Right ventricle myocardium superior (tissue), 1 donor: ENCODE measurements at regions of chr20 and their contacts with region 1.

Region 1: DNA sequence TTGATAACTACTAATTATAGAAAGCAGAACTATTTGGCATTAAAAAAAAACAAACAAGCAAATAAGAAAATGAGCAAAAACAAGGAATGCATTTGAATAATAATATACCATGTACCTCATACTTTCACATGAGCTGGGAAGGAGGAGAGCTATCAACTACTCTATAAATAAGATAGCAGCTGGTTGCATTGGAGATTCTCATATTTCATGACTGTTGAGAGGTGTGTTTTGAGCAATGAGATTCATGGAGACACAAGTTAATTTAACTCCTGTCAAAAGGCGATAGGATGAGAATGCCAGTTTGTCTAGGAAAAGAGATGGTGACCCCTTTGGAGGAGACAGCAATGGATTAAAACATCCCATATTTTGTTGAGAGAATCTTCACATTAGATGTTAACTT is 348.8 kb upstream of the SPTLC3 start:
- DNase-seq: no peak
- ATAC-seq: no peak

Region 2: GRCh38 chr20:12729326-12729725 is 69.4 kb after region 1 on chr20:
- intact Hi-C with region 1: loop called (anchors 5 kb)
- DNase-seq: no peak
- ATAC-seq: no peak

Region 3: GRCh38 chr20:12788632-12789299 is 128.8 kb after region 1 on chr20:
- intact Hi-C with region 1: no loop called
- DNase-seq: no peak
- ATAC-seq: no peak